ENCODE measurements at regions of chr12 and their contacts with region 1.

Region 1: GRCh38 chr12:6039894-6040568 is 84.4 kb downstream of the VWF start:
- DNase-seq: peak; percentile 49 to 58 (median 58)
- H3K4me3 ChIP-seq: peak overlapping the region in 1 of 3 experiments; percentile 42
- H3K4me3 Mint-ChIP-seq: peak overlapping the region; percentile 67 to 79
- H3K27ac ChIP-seq: no peak overlapping the region
- H3K27ac Mint-ChIP-seq: peak overlapping the region in 2 of 7 donors; percentile 8 to 19
- H3K4me1 ChIP-seq: no peaks in the 10 kb centered on the region
- H3K4me1 Mint-ChIP-seq: peaks cover 4% of the 10 kb centered on the region
- H3K27me3 ChIP-seq: no peaks in the 10 kb centered on the region
- H3K27me3 Mint-ChIP-seq: peaks cover 0 to 3% (median 1%) of the 10 kb centered on the region in 3 donors
- CTCF ChIP-seq: peak; percentile 91

Region 2: GRCh38 chr12:5535541-5535940 is 504.5 kb before region 1 on chr12:
- intact Hi-C with region 1: no loop called
- DNase-seq: no peak
- H3K4me3 ChIP-seq: no peak overlapping the region
- H3K4me3 Mint-ChIP-seq: no peak overlapping the region
- H3K27ac ChIP-seq: no peak overlapping the region
- H3K27ac Mint-ChIP-seq: no peak overlapping the region
- H3K4me1 ChIP-seq: no peaks in the 10 kb centered on the region
- H3K4me1 Mint-ChIP-seq: no peaks in the 10 kb centered on the region
- H3K27me3 ChIP-seq: no peaks in the 10 kb centered on the region
- H3K27me3 Mint-ChIP-seq: peaks cover 10 to 13% (median 13%) of the 10 kb centered on the region in 3 donors
- CTCF ChIP-seq: no peak

Region 3: DNA sequence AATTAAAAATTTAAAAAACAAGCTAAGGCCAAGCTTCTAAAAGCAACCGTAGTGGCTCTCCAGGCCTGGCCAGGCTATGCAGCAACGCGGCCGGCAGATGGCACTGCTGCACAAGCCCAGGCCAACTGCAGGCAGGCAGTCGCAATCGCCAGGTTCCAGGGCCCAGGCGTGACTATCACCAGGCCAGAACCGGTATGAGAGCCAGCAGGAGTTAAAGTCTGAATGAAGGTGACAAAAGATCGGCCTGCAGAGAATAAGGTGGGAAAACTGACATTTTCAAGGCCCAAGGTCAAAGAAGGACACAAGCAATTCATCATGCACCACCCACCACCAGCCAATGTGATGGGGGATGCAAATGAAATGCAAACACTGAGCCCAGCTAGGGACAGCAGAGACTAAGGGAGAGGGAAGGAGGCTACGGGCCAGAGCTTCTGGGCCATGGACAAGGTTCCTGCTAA is 51.3 kb before region 1 on chr12:
- intact Hi-C with region 1: loop called (anchors 2 kb)
- DNase-seq: peak; percentile 58 to 73 (median 68)
- H3K4me3 ChIP-seq: no peak overlapping the region
- H3K4me3 Mint-ChIP-seq: no peak overlapping the region
- H3K27ac ChIP-seq: no peak overlapping the region
- H3K27ac Mint-ChIP-seq: no peak overlapping the region
- H3K4me1 ChIP-seq: no peaks in the 10 kb centered on the region
- H3K4me1 Mint-ChIP-seq: peaks cover 3% of the 10 kb centered on the region
- H3K27me3 ChIP-seq: no peaks in the 10 kb centered on the region
- H3K27me3 Mint-ChIP-seq: peaks cover 0 to 2% (median 0%) of the 10 kb centered on the region in 3 donors
- CTCF ChIP-seq: peak; percentile 97

Region 4: GRCh38 chr12:6092784-6093722 is 53.0 kb after region 1 on chr12:
- intact Hi-C with region 1: no loop called
- DNase-seq: peak; percentile 48 to 74 (median 70)
- H3K4me3 ChIP-seq: no peak overlapping the region
- H3K4me3 Mint-ChIP-seq: peak overlapping the region in 1 of 2 donors; percentile 78
- H3K27ac ChIP-seq: peak overlapping the region; percentile 31 to 32
- H3K27ac Mint-ChIP-seq: peak overlapping the region; percentile 8 to 91 (median 79)
- H3K4me1 ChIP-seq: peaks cover 28 to 37% of the 10 kb centered on the region in 2 donors
- H3K4me1 Mint-ChIP-seq: peaks cover 45% of the 10 kb centered on the region
- H3K27me3 ChIP-seq: no peaks in the 10 kb centered on the region
- H3K27me3 Mint-ChIP-seq: peaks cover 6 to 20% (median 7%) of the 10 kb centered on the region in 3 donors
- CTCF ChIP-seq: no peak